ENCODE measurements at regions of chr14 and their contacts with region 1.

Region 1: DNA sequence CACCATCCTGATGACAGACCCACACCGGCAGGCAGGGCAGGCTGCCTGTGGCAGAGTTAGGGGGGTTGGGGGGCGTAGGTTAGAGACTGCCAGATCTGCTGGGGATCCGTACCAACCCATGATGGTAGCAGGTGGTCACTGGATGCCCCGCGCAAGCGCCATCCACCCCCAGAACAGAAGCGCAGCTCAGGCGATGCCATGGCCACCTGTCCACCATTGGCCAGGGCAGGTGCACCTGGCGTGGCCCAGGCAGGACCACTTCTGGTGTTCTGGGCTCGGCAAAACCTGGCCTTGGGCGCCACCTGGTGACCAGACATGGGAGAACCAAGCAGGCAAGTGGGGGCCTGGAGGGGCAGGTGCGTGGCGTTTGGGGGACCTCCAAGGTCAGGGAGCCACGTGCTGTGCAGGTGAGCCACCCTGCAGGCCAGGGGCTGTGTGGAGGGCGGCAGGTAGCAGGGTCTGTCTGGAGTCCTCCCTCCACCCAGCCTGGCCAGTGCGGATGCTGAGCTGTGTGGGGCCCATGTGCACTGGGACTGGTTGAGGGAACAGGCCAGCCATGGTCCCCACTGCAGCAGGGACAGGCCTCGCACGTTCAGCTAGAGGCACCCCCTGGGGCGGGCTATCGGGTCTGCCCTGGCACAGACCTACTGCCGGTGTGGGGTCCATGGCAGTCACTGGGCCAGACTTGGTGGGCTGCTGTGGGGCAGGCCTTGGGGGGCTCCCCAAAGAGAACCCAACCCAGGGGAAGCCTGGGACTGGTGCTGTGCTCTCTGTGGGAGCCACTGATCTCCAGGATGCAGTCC is 15.6 kb downstream of the BAG5 start:
- DNase-seq: peak; percentile 72
- H3K4me3 Mint-ChIP-seq: no peak overlapping the region
- H3K27ac Mint-ChIP-seq: no peak overlapping the region
- H3K4me1 Mint-ChIP-seq: no peaks in the 10 kb centered on the region
- H3K27me3 Mint-ChIP-seq: no peaks in the 10 kb centered on the region

Region 2: DNA sequence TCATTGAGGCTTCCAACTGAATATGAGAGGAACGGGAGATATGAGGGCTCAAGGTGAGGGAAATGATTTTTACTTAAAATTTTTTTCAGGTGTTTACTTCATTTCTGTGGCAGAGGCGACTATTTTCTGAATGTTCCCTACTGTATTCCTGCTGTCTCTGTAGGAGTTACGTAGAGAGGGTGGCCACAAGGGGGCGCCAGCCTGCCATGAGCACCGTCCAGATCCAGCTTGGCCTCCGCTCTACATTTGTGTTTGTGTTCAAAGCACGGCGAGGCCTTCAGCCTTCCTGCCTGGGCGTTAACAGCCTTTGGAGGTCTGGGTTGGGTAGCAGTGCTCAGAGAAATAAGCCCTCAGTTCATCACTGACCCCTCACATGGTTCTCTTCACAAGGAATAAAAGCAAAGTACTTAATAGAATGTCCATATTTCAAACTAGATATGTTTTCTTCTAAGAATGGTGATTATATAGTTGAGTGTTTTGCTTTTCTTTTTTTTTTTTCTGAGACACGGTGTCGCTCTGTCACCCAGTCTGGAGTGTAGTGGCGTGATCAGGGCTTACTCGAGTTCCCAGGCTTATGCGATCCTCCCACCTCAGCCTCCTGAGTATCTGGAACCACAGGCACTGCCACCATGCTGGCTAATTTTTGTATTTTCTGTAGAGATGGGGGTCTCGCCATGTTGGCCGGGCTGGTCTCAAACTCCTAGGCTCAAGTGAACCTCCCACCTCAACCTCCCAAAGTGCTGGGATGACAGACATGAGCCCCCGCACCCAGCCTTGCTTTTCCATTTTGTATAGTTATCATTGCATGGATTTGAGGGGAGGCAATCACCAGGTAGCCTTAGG is 46.5 kb before region 1 on chr14:
- CTCF ChIA-PET with region 1: no interaction called
- intact Hi-C with region 1: loop called (anchors 5 kb)
- DNase-seq: peak; percentile 86
- H3K4me3 Mint-ChIP-seq: no peak overlapping the region
- H3K27ac Mint-ChIP-seq: peak overlapping the region; percentile 60
- H3K4me1 Mint-ChIP-seq: peaks cover 7% of the 10 kb centered on the region
- H3K27me3 Mint-ChIP-seq: no peaks in the 10 kb centered on the region

Region 3: DNA sequence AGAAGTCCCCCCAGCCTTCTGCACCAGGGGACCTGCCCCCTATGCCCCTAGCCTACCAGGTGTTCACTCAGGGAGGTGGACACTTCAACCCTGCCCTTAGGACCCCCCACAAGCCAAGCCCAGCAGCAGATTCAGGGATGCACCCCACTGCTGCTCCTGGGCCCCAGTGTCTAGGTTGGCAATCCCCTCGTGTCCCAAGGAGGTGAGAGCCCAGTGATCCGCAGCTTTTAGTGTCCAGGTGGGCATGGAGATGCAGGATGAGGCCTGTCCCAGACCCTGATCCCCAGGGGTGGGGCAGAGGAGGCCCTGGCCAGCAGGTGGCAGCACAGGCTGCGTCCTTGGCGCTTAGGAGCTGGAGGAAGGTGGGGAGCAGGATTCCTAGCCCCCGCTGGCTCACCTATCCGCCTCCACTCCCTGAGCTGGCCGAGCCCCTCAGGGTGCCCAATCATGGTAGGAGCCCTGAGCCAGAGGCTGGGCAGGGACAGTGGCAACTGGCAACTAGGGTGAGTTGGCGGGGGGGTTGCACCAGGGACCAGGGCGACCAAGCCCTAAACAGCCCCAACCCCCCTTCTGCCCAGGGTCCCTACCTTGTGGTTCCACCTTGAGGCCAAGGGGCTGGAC is 28.3 kb before region 1 on chr14:
- CTCF ChIA-PET with region 1: interaction called, 14 read pairs
- intact Hi-C with region 1: loop called (anchors 1 kb)
- DNase-seq: peak; percentile 66
- H3K4me3 Mint-ChIP-seq: no peak overlapping the region
- H3K27ac Mint-ChIP-seq: no peak overlapping the region
- H3K4me1 Mint-ChIP-seq: peaks cover 4% of the 10 kb centered on the region
- H3K27me3 Mint-ChIP-seq: peaks cover 5% of the 10 kb centered on the region

Region 4: GRCh38 chr14:103910262-103910935 is 363.5 kb after region 1 on chr14:
- CTCF ChIA-PET with region 1: no interaction called
- intact Hi-C with region 1: no loop called
- DNase-seq: peak; percentile 87
- H3K4me3 Mint-ChIP-seq: peak overlapping the region; percentile 25
- H3K27ac Mint-ChIP-seq: peak overlapping the region; percentile 84
- H3K4me1 Mint-ChIP-seq: peaks cover 24% of the 10 kb centered on the region
- H3K27me3 Mint-ChIP-seq: no peaks in the 10 kb centered on the region

Measured in activated naive CD4-positive, alpha-beta T cell treated with anti-CD3 and anti-CD28 coated beads for 36 hours (primary cell).